Right ventricle myocardium superior (tissue), 1 donor: ENCODE measurements at regions of chr11 and their contacts with region 1.

Region 1: DNA sequence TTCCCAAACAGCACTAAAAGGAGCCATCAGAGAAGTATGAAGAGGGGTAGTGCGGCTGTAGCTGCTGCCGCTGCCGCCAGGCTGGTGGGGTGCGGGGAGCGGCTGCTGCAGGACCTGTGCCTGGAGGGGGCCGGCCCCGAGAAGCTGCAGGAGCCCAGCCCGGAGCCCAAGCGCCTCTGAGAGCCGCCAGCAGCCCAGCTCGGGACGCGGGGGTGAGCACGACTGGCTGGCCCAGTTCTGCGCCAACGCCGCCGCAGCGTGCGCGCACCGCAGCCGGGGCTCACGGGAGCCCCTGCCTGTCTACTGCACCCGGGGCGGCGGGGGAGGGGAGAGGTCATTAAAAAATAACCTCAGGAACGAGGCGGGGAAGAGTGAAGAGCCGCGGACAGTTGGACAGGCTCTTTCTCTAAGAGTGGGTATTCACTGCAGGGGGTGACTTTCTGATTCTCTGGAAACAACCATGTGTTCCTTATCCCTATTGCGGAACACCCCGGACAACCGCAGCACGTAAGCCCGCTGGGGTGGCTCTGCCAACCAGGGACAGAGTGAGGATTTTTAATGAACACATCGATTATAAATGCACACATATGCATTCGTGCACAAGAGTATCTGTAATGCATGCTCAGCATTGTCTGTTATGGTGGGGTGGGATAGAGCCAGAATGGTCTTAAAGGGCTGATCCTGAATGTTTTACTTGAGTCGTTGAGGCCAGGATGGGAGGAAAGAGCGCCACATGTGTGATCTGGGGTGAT is 453 bp downstream of the GAS2 start:
- DNase-seq: peak; percentile 66
- ATAC-seq: peak; percentile 93

Region 2: GRCh38 chr11:22625448-22626287 is 41.2 kb before region 1 on chr11 and contains the start of gene FANCF:
- intact Hi-C with region 1: loop called (anchors 2 kb)
- DNase-seq: peak; percentile 92
- ATAC-seq: peak; percentile 99
- total RNA-seq, gene FANCF: 4.1 TPM